CD8-positive, alpha-beta T cell (primary cell): ENCODE measurements at regions of chr5 and their contacts with region 1.

Region 1: DNA sequence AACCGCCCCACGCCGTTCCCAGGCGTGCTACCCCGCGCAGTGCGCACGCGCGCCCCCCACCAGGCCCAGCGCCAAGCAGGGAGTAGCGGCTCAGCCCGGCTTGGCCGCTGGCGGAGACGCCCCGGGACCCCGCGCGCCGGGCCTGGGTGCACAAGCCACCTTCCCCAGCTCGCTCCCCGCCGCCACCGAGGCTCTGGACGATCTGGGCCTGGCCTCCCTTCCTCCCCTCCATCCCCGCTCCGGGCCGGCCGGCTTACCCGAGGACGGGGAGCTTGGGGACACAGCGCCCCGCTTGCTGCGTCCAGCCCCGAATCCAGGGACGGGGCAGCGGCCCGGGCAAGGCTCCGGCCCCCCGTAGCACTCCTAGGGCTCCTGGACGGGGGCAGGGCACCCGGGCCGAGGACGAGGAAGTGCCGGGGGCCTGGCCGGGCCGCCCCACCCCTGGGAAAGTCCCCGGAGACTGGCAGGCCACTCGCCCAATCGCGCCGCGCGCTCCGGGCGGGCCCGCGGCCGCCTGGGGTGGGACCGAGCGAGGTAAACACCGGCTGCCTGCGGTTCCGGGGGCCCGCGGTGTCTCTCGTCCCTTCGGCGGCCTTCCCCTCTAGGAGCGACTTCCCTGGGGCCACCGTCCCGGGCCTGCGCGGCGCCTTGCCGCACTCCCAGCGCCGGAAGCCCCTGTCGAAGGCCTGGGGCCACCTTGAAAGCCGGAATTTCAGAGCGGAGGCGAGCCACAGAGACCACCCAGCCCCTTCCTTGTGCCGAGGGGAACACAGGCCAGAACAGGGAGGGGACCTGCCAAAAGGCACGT is at the start of gene TNIP1:
- DNase-seq: peak; percentile 87 to 97 (median 94)
- ATAC-seq: peak; percentile 84
- H3K4me3 ChIP-seq: peak within 1 kb of the TSS; percentile 76
- H3K4me3 Mint-ChIP-seq: peak within 1 kb of the TSS; percentile 93
- H3K27ac ChIP-seq: peak within 1 kb of the TSS; percentile 70 to 98
- H3K27ac Mint-ChIP-seq: peak within 1 kb of the TSS; percentile 95
- H3K4me1 ChIP-seq: peaks cover 56% of the 10 kb centered on the region
- H3K4me1 Mint-ChIP-seq: peaks cover 80% of the 10 kb centered on the region
- H3K27me3 ChIP-seq: no peaks in the 10 kb centered on the region
- H3K27me3 Mint-ChIP-seq: no peaks in the 10 kb centered on the region
- CTCF ChIP-seq: no peak
- total RNA-seq, gene TNIP1: 133 to 134 TPM

Region 2: GRCh38 chr5:150000256-150000989 is 1080.4 kb before region 1 on chr5 and contains the starts of genes HMGXB3 and TIGD6:
- CTCF ChIA-PET with region 1: no interaction called
- POLR2A ChIA-PET with region 1: no interaction called
- intact Hi-C with region 1: loop called in 1 of 2 experiments (anchors 5 kb)
- DNase-seq: peak; percentile 67 to 92 (median 83)
- ATAC-seq: peak; percentile 84
- H3K4me3 ChIP-seq: peak within 1 kb of the TSS; percentile 73 to 79
- H3K4me3 Mint-ChIP-seq: peak within 1 kb of the TSS; percentile 89
- H3K27ac ChIP-seq: peak within 1 kb of the TSS; percentile 75 to 80
- H3K27ac Mint-ChIP-seq: peak within 1 kb of the TSS; percentile 91
- H3K4me1 ChIP-seq: peaks cover 22% of the 10 kb centered on the region
- H3K4me1 Mint-ChIP-seq: peaks cover 39% of the 10 kb centered on the region
- H3K27me3 ChIP-seq: no peaks in the 10 kb centered on the region
- H3K27me3 Mint-ChIP-seq: no peaks in the 10 kb centered on the region
- CTCF ChIP-seq: no peak
- total RNA-seq, gene HMGXB3: 27.4 to 29.7 TPM
- total RNA-seq, gene TIGD6: 0.97 to 1.5 TPM

Region 3: GRCh38 chr5:150449517-150450339 is 631.1 kb before region 1 on chr5 and contains the start of gene RPS14:
- CTCF ChIA-PET with region 1: no interaction called
- POLR2A ChIA-PET with region 1: no interaction called
- intact Hi-C with region 1: loop called in 1 of 2 experiments (anchors 1 kb)
- DNase-seq: peak; percentile 90 to 97 (median 95)
- ATAC-seq: peak; percentile 92
- H3K4me3 ChIP-seq: peak within 1 kb of the TSS; percentile 77 to 89
- H3K4me3 Mint-ChIP-seq: peak within 1 kb of the TSS; percentile 100
- H3K27ac ChIP-seq: peak within 1 kb of the TSS; percentile 93 to 98
- H3K27ac Mint-ChIP-seq: peak within 1 kb of the TSS; percentile 100
- H3K4me1 ChIP-seq: peaks cover 22% of the 10 kb centered on the region
- H3K4me1 Mint-ChIP-seq: peaks cover 36% of the 10 kb centered on the region
- H3K27me3 ChIP-seq: no peaks in the 10 kb centered on the region
- H3K27me3 Mint-ChIP-seq: no peaks in the 10 kb centered on the region
- CTCF ChIP-seq: peak; percentile 84
- total RNA-seq, gene RPS14: 5,604 to 5,613 TPM

Region 4: GRCh38 chr5:150700594-150701293 is 380.1 kb before region 1 on chr5 and contains the start of gene RBM22:
- CTCF ChIA-PET with region 1: no interaction called
- POLR2A ChIA-PET with region 1: no interaction called
- intact Hi-C with region 1: loop called in 1 of 2 experiments (anchors 2 kb)
- DNase-seq: peak; percentile 82 to 96 (median 94)
- ATAC-seq: peak; percentile 90
- H3K4me3 ChIP-seq: peak within 1 kb of the TSS; percentile 80 to 81
- H3K4me3 Mint-ChIP-seq: no peak within 1 kb of the TSS
- H3K27ac ChIP-seq: peak within 1 kb of the TSS; percentile 94 to 97
- H3K27ac Mint-ChIP-seq: no peak within 1 kb of the TSS
- H3K4me1 ChIP-seq: peaks cover 19% of the 10 kb centered on the region
- H3K4me1 Mint-ChIP-seq: peaks cover 2% of the 10 kb centered on the region
- H3K27me3 ChIP-seq: no peaks in the 10 kb centered on the region
- H3K27me3 Mint-ChIP-seq: no peaks in the 10 kb centered on the region
- CTCF ChIP-seq: peak; percentile 85
- total RNA-seq, gene RBM22: 119 to 125 TPM

Region 5: GRCh38 chr5:151094054-151094851 is 13.4 kb after region 1 on chr5:
- CTCF ChIA-PET with region 1: interaction called, 4 read pairs
- POLR2A ChIA-PET with region 1: interaction called, 13 read pairs
- intact Hi-C with region 1: loop called in 1 of 2 experiments (anchors 2 kb)
- DNase-seq: peak in 7 of 9 experiments; percentile 27 to 86 (median 53)
- ATAC-seq: peak; percentile 50
- H3K4me3 ChIP-seq: peak overlapping the region in 1 of 2 experiments; percentile 18
- H3K4me3 Mint-ChIP-seq: peak overlapping the region; percentile 52
- H3K27ac ChIP-seq: peak overlapping the region in 1 of 2 experiments; percentile 73
- H3K27ac Mint-ChIP-seq: peak overlapping the region; percentile 89
- H3K4me1 ChIP-seq: peaks cover 53% of the 10 kb centered on the region
- H3K4me1 Mint-ChIP-seq: peaks cover 70% of the 10 kb centered on the region
- H3K27me3 ChIP-seq: no peaks in the 10 kb centered on the region
- H3K27me3 Mint-ChIP-seq: no peaks in the 10 kb centered on the region
- CTCF ChIP-seq: no peak

Region 6: GRCh38 chr5:151157426-151158286 is 76.8 kb after region 1 on chr5 and contains the start of gene ANXA6:
- CTCF ChIA-PET with region 1: interaction called, 3 read pairs
- POLR2A ChIA-PET with region 1: no interaction called
- intact Hi-C with region 1: loop called in 1 of 2 experiments (anchors 2 kb)
- DNase-seq: peak in 8 of 9 experiments; percentile 50 to 86 (median 66)
- ATAC-seq: peak; percentile 70
- H3K4me3 ChIP-seq: peak within 1 kb of the TSS; percentile 52 to 94
- H3K4me3 Mint-ChIP-seq: peak within 1 kb of the TSS; percentile 97
- H3K27ac ChIP-seq: peak within 1 kb of the TSS; percentile 68 to 90
- H3K27ac Mint-ChIP-seq: peak within 1 kb of the TSS; percentile 95
- H3K4me1 ChIP-seq: peaks cover 43% of the 10 kb centered on the region
- H3K4me1 Mint-ChIP-seq: peaks cover 65% of the 10 kb centered on the region
- H3K27me3 ChIP-seq: no peaks in the 10 kb centered on the region
- H3K27me3 Mint-ChIP-seq: no peaks in the 10 kb centered on the region
- CTCF ChIP-seq: no peak
- total RNA-seq, gene ANXA6: 83.5 to 89.4 TPM

Region 7: DNA sequence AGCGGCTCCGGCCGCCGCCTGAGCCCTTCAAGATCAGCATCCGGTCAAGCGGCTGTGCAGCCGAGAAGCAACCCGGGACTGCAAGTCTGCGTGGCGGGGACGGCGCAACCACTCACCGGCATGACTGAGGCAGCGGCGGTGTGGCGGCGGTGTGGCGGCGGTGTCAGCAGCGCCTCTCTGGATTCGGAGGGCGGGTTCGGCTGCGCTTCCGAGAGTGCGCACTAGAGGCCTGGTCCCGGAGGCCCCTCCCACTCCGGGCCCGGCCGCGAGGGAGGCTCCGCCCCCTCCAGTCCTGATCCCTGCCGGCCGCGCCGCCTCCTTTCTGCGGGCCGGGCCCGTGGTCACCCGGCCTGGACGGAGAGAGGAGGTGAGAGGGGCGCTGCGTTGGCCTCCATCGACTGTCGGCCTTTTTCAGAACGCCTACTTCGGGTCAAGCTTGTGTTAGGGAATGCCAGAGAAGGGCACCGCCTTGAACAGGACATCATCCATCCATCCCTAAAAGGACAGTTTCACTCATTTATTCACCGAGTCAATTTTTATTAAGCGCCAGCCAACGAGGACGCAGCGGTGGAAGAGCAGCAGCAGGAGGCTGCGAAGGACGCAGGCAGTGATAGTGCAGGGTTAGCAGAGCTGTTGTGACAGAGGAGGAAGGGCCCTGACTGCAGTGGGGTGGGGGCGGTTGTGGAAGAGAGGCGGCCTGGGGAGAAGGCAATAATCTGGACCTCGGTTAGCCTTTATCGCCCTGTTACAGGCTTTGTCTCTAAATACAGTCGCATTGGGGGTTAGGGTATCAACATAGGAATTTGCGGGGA is 677.8 kb after region 1 on chr5 and contains the start of gene ATOX1:
- CTCF ChIA-PET with region 1: no interaction called
- POLR2A ChIA-PET with region 1: no interaction called
- intact Hi-C with region 1: loop called in 1 of 2 experiments (anchors 5 kb)
- DNase-seq: peak; percentile 82 to 94 (median 90)
- ATAC-seq: peak; percentile 99
- H3K4me3 ChIP-seq: peak within 1 kb of the TSS; percentile 61 to 91
- H3K4me3 Mint-ChIP-seq: peak within 1 kb of the TSS; percentile 95
- H3K27ac ChIP-seq: peak within 1 kb of the TSS; percentile 60 to 70
- H3K27ac Mint-ChIP-seq: peak within 1 kb of the TSS; percentile 94
- H3K4me1 ChIP-seq: peaks cover 26% of the 10 kb centered on the region
- H3K4me1 Mint-ChIP-seq: peaks cover 35% of the 10 kb centered on the region
- H3K27me3 ChIP-seq: no peaks in the 10 kb centered on the region
- H3K27me3 Mint-ChIP-seq: no peaks in the 10 kb centered on the region
- CTCF ChIP-seq: no peak
- total RNA-seq, gene ATOX1: 12.6 to 13.2 TPM